Activated T-helper 2 cell treated with anti-CD3 and anti-CD28 coated beads, Interferon-gamma antibody, Interleukin-2, Interleukin-4, amounts not matched to agents 10 μg/mL and 5 μg/mL and 100 μg/mL, durations not matched to agents 14 hours and 24 hours and 36 hours (primary cell): ENCODE measurements at regions of chr1 and their contacts with region 1.

Region 1: DNA sequence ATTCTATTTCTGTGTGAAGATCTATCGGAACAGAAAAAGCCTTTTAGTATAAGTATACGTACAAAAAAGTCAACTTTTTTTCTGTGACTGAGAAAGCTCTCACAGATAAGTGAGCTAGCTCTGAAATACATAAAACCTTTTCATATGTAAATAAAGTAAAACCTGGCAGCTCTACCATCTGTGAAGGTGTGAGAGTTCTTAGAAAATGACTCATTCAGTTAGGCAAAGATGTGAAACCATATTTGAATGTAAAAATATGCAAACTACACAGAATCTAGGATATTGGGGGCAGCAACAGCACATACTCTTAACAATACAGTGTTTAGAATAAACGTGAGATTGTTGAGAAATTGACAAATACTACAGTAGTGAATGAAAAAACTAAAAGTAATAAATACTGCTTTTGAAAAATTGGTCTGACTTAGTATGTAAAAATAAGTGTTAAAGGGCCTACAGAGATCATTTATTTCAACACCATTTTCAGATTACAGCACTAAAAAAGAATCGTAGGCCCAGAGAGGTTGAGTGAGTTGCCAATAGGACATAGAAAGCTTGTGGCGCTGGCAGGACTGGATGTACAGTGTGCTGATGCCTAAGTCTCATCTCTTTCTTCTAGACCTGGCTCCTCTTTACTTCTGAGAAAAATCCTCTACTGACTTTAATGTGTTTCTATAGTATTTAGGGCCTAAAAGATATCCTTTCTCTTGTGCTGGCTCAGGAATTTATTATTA is 19.8 kb downstream of the ATP6V1G3 start:
- DNase-seq: no peak
- H3K4me3 Mint-ChIP-seq: peak overlapping the region; percentile 73
- H3K27ac Mint-ChIP-seq: peak overlapping the region; percentile 85
- H3K4me1 Mint-ChIP-seq: peaks cover 60% of the 10 kb centered on the region
- H3K27me3 Mint-ChIP-seq: no peaks in the 10 kb centered on the region

Region 2: GRCh38 chr1:198167436-198167934 is 353.2 kb before region 1 on chr1:
- intact Hi-C with region 1: loop called (anchors 5 kb)
- DNase-seq: no peak
- H3K4me3 Mint-ChIP-seq: peak overlapping the region; percentile 48
- H3K27ac Mint-ChIP-seq: peak overlapping the region; percentile 89
- H3K4me1 Mint-ChIP-seq: peaks cover 70% of the 10 kb centered on the region
- H3K27me3 Mint-ChIP-seq: no peaks in the 10 kb centered on the region

Region 3: DNA sequence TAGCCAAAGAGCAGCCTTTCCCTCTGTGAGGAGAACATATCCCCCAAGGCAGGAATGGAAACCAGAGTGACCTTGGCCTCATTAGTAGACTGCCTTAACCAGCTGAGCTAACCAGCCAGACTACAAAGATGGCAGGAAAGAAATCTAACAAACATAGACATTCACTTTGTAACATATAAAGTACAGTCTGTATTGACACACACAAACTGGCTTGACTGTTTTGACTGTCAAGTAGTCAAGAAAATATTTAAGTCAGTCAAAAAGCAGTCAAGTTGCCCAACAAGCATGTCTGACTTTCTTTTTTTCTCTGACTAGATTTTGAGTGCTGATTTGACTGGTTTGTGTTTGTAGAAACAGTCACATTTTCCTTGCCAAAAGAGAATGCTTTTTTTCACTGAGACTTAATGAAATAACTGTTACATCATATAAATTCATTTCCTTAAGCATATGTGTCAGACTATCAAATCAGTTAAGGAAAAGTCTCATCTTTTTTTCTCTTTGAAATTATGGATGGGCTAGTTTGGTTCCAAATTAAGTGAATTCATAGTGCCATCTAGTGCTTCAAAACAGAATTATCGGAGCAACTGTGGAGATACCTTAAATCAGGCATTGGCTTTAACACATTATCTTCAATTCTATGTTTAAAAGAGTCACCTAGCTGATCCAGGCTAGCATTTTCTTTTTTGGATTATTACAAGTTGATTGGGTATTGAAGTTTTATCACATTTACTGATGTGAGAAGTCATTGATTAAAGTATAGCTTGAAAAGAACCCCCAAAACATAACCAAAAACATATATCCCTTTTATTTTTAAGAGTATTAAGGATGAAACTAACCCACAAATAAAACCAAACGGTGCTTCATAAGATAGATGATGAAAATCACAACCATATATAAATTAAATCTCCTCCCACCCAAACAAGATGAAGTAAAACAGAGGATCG is 55.2 kb before region 1 on chr1:
- intact Hi-C with region 1: loop called (anchors 5 kb)
- DNase-seq: no peak
- H3K4me3 Mint-ChIP-seq: no peak overlapping the region
- H3K27ac Mint-ChIP-seq: peak overlapping the region; percentile 12
- H3K4me1 Mint-ChIP-seq: peaks cover 17% of the 10 kb centered on the region
- H3K27me3 Mint-ChIP-seq: no peaks in the 10 kb centered on the region

Region 4: DNA sequence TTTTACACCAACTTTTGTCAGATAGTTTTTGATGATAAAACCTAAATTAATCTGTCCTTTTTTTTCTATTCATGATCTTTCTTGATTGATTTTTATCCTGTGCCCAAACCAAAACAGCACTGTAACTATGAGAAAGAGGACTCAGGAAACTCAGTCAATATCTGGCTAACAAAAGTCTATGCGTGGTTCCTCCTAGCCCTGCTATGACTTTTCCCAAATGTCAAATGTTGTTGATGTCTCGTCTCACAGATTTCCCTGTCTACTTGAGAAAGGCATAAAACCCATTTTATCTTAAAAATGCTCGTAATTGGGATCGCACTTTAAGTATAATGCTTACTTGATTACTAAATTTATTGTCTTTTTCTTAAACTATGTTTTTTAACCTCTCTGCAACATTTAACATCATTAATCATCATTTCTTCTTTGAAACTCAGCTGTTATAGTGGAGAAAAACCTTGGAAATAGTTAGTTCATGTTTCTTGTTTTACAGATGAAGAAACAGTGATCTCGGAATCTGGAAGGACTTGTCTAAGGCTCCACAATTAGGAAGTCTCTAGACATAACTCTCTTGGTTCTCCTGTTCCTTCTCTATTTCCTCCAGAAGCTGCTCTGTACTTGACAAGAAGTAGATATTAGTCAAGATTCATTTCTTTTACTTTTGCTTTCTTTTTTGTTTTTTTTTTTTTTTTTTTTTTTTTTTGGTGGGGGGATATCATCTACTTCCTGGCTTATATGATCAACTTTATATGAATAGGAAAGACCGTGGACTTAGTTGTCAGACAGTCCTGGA is 92.0 kb after region 1 on chr1:
- intact Hi-C with region 1: loop called (anchors 2 kb)
- DNase-seq: no peak
- H3K4me3 Mint-ChIP-seq: peak overlapping the region; percentile 75
- H3K27ac Mint-ChIP-seq: peak overlapping the region; percentile 86
- H3K4me1 Mint-ChIP-seq: peaks cover 59% of the 10 kb centered on the region
- H3K27me3 Mint-ChIP-seq: no peaks in the 10 kb centered on the region

Region 5: GRCh38 chr1:198651650-198652400 is 131.1 kb after region 1 on chr1:
- intact Hi-C with region 1: loop called (anchors 1 kb)
- DNase-seq: no peak
- H3K4me3 Mint-ChIP-seq: peak overlapping the region; percentile 73
- H3K27ac Mint-ChIP-seq: peak overlapping the region; percentile 67
- H3K4me1 Mint-ChIP-seq: peaks cover 70% of the 10 kb centered on the region
- H3K27me3 Mint-ChIP-seq: no peaks in the 10 kb centered on the region

Region 6: DNA sequence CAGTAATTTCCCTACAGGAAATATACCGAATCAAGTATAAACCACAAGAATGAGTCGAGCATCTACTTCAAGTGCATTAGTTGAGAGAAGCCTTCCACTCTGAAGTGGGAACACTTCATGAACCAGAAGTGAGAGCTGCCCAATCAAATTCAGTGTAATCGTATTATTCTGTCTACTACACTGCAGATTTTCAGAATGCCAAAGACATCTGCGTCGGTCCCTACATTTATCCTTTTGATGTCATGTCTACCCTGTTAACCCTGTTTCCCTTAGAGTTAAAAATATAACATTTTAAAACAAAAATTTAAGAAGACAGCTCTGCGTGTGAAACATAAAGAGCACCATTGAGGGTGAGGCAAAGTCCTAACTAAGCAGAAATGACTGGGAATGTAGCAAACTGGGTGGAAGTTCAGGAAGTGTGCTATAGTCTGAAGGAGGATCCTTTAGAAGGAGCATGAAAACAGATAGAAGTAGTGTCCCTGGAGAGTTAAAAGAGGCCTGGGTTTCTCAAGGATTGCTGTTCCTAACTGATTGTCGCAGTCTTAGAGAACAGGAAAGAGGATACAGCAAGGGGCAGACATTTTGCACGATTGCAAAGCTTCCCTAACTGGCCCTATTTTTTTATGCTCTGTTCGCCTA is 409.4 kb after region 1 on chr1:
- intact Hi-C with region 1: loop called (anchors 10 kb)
- DNase-seq: no peak
- H3K4me3 Mint-ChIP-seq: peak overlapping the region; percentile 82
- H3K27ac Mint-ChIP-seq: peak overlapping the region; percentile 86
- H3K4me1 Mint-ChIP-seq: peaks cover 48% of the 10 kb centered on the region
- H3K27me3 Mint-ChIP-seq: no peaks in the 10 kb centered on the region